Activated CD8-positive, alpha-beta T cell treated with anti-CD3 and anti-CD28 coated beads for 36 hours (primary cell): ENCODE measurements at regions of chr4 and their contacts with region 1.

Region 1: DNA sequence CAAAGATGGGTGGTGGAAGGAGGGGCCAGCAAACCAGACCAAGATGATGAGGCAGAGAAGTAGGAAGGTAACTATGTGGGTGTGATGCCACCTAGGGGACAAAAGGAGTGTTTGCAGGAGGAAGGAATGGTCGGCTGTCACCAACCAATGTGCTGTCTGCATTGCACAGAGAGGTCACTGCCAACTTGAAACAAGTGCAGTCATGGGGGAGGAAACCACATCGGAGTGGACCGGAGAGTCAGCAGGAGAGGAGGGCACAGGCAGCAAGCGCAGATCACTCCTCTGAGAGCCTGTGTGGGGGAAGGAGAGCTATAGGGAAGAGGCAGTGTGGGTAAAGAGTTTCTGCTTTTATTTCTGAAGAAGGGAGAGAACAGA is 38.5 kb upstream of the FGFBP2 start:
- DNase-seq: peak; percentile 73
- ATAC-seq: peak; percentile 96
- H3K4me3 Mint-ChIP-seq: no peak overlapping the region
- H3K27ac Mint-ChIP-seq: no peak overlapping the region
- H3K4me1 Mint-ChIP-seq: peaks cover 3% of the 10 kb centered on the region
- H3K27me3 Mint-ChIP-seq: no peaks in the 10 kb centered on the region
- CTCF ChIP-seq: peak; percentile 77

Region 2: DNA sequence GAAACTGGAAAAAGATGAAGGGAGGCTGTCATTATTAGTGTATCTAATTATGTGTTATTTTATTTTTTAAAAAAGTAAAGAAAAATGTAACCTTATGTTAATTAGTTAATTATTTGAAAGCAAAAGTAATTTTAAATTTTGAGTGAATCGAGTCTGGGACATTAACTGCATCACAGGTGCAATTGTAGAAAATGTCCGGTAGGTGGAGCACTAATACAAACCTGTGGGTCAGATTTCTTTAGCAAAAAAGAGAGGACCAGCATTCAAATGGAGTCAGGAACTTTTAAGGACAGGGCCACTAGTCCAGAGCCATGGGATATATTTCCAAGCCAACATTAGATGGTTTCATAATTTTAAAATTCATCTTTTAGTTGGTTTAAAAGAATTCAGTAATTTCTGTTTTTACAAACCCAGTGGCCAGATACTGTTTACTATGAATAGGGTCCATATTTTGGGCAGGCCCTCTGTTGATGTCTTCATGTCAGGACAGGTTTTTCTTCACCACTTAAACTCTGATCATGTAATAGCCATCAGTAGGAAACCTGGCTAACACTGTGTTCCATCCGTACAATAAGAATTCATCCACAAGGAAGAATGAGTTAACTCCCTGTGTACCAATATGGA is 271.4 kb before region 1 on chr4:
- CTCF ChIA-PET with region 1: interaction called, 10 read pairs
- POLR2A ChIA-PET with region 1: no interaction called
- intact Hi-C with region 1: no loop called
- DNase-seq: peak; percentile 43
- ATAC-seq: peak; percentile 76
- H3K4me3 Mint-ChIP-seq: no peak overlapping the region
- H3K27ac Mint-ChIP-seq: no peak overlapping the region
- H3K4me1 Mint-ChIP-seq: peaks cover 18% of the 10 kb centered on the region
- H3K27me3 Mint-ChIP-seq: no peaks in the 10 kb centered on the region
- CTCF ChIP-seq: peak; percentile 94

Region 3: DNA sequence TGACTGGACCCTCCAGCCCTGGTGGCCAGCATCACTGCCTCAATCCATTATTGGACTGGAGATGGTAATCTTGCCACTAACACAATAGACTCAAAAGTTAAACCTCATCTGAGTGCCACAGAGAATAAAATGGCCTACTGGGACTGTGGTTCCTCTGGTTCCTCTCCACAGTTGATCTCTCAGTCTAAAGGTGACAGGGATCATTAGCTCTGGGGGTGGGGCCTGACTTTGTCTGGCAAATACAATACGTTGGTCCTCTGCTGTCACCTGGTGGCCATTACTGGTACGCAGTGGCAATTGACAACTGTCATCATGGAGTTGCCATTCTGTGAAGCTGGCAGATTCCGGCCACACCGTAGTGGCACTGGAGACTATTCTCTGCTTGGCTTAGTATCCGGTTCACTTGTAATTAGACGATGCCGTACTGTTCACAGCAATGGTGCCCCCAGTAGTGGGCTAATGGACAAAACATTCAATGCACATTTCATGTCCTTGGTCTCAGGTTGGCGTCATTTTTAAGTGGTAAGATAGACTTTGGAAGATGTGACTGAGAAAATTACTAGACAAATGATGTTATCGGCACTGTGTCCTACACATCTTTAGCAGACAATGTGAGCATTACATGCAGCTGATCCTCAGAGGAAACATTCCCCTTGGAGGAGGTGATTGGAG is 45.2 kb before region 1 on chr4:
- CTCF ChIA-PET with region 1: interaction called, 50 read pairs
- POLR2A ChIA-PET with region 1: no interaction called
- intact Hi-C with region 1: no loop called
- DNase-seq: peak; percentile 96
- ATAC-seq: peak; percentile 90
- H3K4me3 Mint-ChIP-seq: no peak overlapping the region
- H3K27ac Mint-ChIP-seq: no peak overlapping the region
- H3K4me1 Mint-ChIP-seq: peaks cover 19% of the 10 kb centered on the region
- H3K27me3 Mint-ChIP-seq: peaks cover 2% of the 10 kb centered on the region
- CTCF ChIP-seq: peak; percentile 87

Region 4: GRCh38 chr4:15963001-15963451 is 38.4 kb before region 1 on chr4 and contains the start of gene FGFBP2:
- CTCF ChIA-PET with region 1: interaction called, 50 read pairs
- POLR2A ChIA-PET with region 1: no interaction called
- intact Hi-C with region 1: loop called (anchors 2 kb)
- DNase-seq: peak; percentile 92
- ATAC-seq: peak; percentile 77
- H3K4me3 Mint-ChIP-seq: peak within 1 kb of the TSS; percentile 59
- H3K27ac Mint-ChIP-seq: peak within 1 kb of the TSS; percentile 86
- H3K4me1 Mint-ChIP-seq: peaks cover 42% of the 10 kb centered on the region
- H3K27me3 Mint-ChIP-seq: peaks cover 2% of the 10 kb centered on the region
- CTCF ChIP-seq: no peak
- total RNA-seq, gene FGFBP2: 6.3 to 8.2 TPM

Region 5: DNA sequence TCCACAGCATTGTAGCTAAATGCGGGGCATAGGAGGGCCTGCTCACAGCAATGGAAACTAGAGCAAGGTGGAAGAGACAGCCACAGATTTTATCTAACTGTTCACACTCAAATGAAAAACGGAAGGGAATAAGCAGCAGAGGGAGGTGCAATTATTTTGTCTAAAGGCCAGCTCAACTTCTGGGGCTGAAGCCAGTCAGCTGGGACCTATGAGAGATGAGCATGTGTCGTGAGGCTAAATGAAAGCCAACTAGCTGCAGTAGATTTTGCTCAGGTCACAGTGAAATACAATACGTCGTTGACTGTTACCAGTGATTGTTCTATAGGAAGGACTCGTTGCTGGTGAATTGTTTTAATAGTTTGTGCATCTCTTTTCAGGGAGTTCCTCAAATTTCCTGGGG is 12.0 kb before region 1 on chr4:
- CTCF ChIA-PET with region 1: interaction called, 12 read pairs
- POLR2A ChIA-PET with region 1: no interaction called
- intact Hi-C with region 1: no loop called
- DNase-seq: no peak
- ATAC-seq: no peak
- H3K4me3 Mint-ChIP-seq: no peak overlapping the region
- H3K27ac Mint-ChIP-seq: no peak overlapping the region
- H3K4me1 Mint-ChIP-seq: peaks cover 3% of the 10 kb centered on the region
- H3K27me3 Mint-ChIP-seq: peaks cover 9% of the 10 kb centered on the region
- CTCF ChIP-seq: no peak

Region 6: DNA sequence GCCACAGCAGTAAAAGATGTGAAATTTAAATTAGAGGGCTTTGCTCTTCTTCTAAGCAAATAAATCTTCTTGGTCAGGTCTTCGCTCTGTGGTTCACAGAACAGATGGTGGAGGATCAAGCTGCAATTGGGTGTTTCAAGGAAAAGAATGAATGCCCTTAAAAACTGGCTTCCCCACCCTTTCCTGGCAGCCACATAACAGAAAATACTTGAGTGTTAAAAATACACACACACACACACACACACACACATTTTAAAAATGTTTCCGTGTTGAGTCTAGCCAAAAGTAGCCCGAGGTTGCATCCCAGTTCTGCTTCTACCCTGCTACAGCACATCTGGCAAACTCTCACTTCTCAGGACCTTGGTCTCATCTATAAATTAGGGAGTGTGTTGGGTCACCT is 18.2 kb after region 1 on chr4:
- CTCF ChIA-PET with region 1: interaction called, 10 read pairs
- POLR2A ChIA-PET with region 1: no interaction called
- intact Hi-C with region 1: no loop called
- DNase-seq: no peak
- ATAC-seq: no peak
- H3K4me3 Mint-ChIP-seq: no peak overlapping the region
- H3K27ac Mint-ChIP-seq: no peak overlapping the region
- H3K4me1 Mint-ChIP-seq: no peaks in the 10 kb centered on the region
- H3K27me3 Mint-ChIP-seq: peaks cover 3% of the 10 kb centered on the region
- CTCF ChIP-seq: no peak

Region 7: DNA sequence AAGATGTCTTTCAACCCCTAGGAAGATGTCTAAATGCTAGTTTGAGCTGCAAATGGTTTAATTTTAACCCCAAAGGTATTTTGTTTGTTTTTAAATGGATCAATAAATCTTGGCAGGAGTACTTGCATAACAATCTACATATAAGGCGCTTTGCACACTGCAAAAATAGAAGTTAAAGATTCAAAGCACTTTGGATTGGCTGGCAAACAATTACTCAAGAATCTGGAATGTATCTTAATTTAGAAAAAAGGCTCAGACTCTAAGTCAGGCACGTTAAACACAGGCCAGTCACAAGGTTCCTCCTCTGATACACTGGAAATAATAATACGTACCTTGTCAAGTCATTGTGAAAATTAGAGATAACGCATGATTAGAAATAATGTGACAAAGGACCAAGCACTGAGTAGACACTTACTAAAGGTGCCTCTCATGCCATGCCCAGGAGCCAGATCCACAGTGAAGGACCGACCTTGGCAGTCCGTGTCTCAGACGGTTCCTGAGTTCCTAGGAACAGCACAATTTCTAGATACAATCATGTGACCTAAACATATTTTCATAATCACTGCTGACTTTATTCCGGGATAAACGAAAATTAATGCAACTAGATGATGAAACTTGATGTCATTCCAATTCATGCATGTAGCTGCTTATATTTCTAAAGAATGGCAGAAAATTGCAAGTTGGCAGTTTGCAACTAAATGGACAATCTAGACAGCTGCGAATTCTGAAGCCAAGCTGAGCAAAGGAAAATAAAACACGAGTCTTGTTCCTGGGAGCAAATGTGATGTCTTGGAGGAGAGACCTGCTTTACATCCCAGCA is 32.7 kb after region 1 on chr4:
- CTCF ChIA-PET with region 1: no interaction called
- POLR2A ChIA-PET with region 1: no interaction called
- intact Hi-C with region 1: no loop called
- DNase-seq: no peak
- ATAC-seq: no peak
- H3K4me3 Mint-ChIP-seq: no peak overlapping the region
- H3K27ac Mint-ChIP-seq: no peak overlapping the region
- H3K4me1 Mint-ChIP-seq: no peaks in the 10 kb centered on the region
- H3K27me3 Mint-ChIP-seq: peaks cover 2% of the 10 kb centered on the region
- CTCF ChIP-seq: no peak

Region 8: GRCh38 chr4:16237715-16238114 is 236.2 kb after region 1 on chr4:
- CTCF ChIA-PET with region 1: no interaction called
- POLR2A ChIA-PET with region 1: no interaction called
- intact Hi-C with region 1: no loop called
- DNase-seq: no peak
- ATAC-seq: no peak
- H3K4me3 Mint-ChIP-seq: no peak overlapping the region
- H3K27ac Mint-ChIP-seq: no peak overlapping the region
- H3K4me1 Mint-ChIP-seq: no peaks in the 10 kb centered on the region
- H3K27me3 Mint-ChIP-seq: no peaks in the 10 kb centered on the region
- CTCF ChIP-seq: no peak